ENCODE measurements at regions of chr1 and their contacts with region 1.

Region 1: GRCh38 chr1:65230731-65231481 is 78.4 kb upstream of the DNAJC6 start:
- DNase-seq: peak; percentile 79 to 96 (median 90)
- H3K4me3 ChIP-seq: peak overlapping the region in 1 of 7 experiments; percentile 21
- H3K27ac ChIP-seq: peak overlapping the region; percentile 37 to 82
- H3K4me1 ChIP-seq: peaks cover 19 to 68% (median 45%) of the 10 kb centered on the region in 4 experiments
- H3K27me3 ChIP-seq: no peaks in the 10 kb centered on the region

Region 2: GRCh38 chr1:65114322-65114721 is 116.6 kb before region 1 on chr1:
- CTCF ChIA-PET with region 1: no interaction called
- POLR2A ChIA-PET with region 1: no interaction called
- DNase-seq: no peak
- H3K4me3 ChIP-seq: no peak overlapping the region
- H3K27ac ChIP-seq: no peak overlapping the region
- H3K4me1 ChIP-seq: peaks cover 0 to 21% (median 11%) of the 10 kb centered on the region in 4 experiments
- H3K27me3 ChIP-seq: no peaks in the 10 kb centered on the region

Region 3: GRCh38 chr1:65147415-65148177 is 83.3 kb before region 1 on chr1:
- CTCF ChIA-PET with region 1: no interaction called
- POLR2A ChIA-PET with region 1: no interaction called
- DNase-seq: peak in 2 of 3 donors; percentile 38 to 78
- H3K4me3 ChIP-seq: peak overlapping the region; percentile 28 to 81 (median 74)
- H3K27ac ChIP-seq: no peak overlapping the region
- H3K4me1 ChIP-seq: peaks cover 4 to 30% (median 24%) of the 10 kb centered on the region in 4 experiments
- H3K27me3 ChIP-seq: peaks cover 0 to 15% (median 11%) of the 10 kb centered on the region in 5 experiments

Region 4: DNA sequence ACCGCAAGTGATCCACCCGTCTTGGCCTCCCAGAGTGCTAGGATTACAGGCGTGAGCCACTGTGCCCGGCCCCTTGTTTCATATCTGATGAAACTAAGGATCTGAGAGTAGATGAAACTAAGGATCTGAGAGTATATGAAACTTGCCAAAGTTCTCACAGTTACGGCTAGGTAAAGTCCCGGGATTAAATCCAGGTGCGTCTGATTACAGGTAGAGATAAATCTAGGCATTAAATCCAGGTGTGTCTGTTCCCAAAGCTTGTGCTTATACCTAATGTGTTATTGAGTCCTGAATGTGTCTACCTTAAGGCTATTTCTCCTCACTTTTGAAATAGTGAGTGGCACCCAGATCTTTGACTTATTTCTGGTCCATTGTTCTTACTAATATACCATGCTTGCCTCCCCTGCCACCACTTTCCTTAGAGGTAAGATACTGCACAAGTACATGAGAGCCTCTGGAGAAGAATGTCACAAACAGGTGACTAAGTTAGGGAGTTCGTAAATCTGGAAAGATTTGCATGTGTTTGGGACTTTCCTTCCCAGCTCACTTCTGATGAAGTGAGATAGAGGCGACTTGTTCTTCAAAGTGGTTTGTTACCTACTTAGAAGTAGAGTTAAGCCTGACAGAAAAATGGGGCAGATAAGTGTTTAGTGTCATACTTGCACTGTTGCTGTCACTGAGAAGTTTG is 16.4 kb before region 1 on chr1:
- CTCF ChIA-PET with region 1: interaction called, 24 read pairs
- POLR2A ChIA-PET with region 1: no interaction called
- DNase-seq: no peak
- H3K4me3 ChIP-seq: no peak overlapping the region
- H3K27ac ChIP-seq: no peak overlapping the region
- H3K4me1 ChIP-seq: peaks cover 0 to 3% (median 0%) of the 10 kb centered on the region in 4 experiments
- H3K27me3 ChIP-seq: no peaks in the 10 kb centered on the region